A549 (cell line): ENCODE measurements at regions of chr9 and their contacts with region 1.

Region 1: DNA sequence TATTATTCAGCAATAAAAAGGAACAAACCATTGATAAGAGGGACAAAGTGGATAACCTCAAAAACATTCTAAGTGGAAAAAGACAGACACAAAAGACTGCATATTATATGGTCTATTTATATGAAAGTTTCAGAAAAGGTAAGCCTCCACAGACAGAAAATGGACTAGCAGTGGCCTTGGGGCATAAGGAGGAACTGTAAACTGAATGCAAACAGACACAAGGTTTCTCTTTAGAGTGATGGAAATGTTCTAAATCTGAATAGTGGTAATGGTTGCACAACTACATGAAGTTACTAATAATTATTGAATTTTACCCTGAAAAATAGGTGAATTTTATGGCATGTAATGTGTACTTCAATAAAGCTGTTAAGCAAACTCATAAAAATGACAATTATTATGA is 286.3 kb upstream of the PAPPA start:
- DNase-seq: no peak
- ATAC-seq: no peak
- H3K4me3 ChIP-seq: no peak overlapping the region
- H3K27ac ChIP-seq: no peak overlapping the region
- H3K4me1 ChIP-seq: no peaks in the 10 kb centered on the region
- CTCF ChIP-seq: no peak
- EP300 ChIP-seq: no peak
- POLR2A ChIP-seq: no peak
- RAD21 ChIP-seq: no peak

Region 2: GRCh38 chr9:115883457-115884329 is 16.4 kb after region 1 on chr9:
- CTCF ChIA-PET with region 1: interaction called, 16 read pairs
- POLR2A ChIA-PET with region 1: no interaction called
- DNase-seq: peak; percentile 60 to 88
- ATAC-seq: peak; percentile 90 to 97
- H3K4me3 ChIP-seq: no peak overlapping the region
- H3K27ac ChIP-seq: peak overlapping the region; percentile 76 to 93
- H3K4me1 ChIP-seq: peaks cover 21% of the 10 kb centered on the region
- CTCF ChIP-seq: peak; percentile 78
- EP300 ChIP-seq: no peak
- POLR2A ChIP-seq: no peak
- RAD21 ChIP-seq: peak; percentile 95 to 98